SK-N-SH (cell line): ENCODE measurements at regions of chr11 and their contacts with region 1.

Region 1: GRCh38 chr11:19903620-19904069 is 191.0 kb downstream of the NAV2 start:
- DNase-seq: peak; percentile 59
- H3K4me3 ChIP-seq: no peak overlapping the region; a peak in 1 of 4 replicates
- H3K27ac ChIP-seq: peak overlapping the region; percentile 50 to 57
- H3K4me1 ChIP-seq: peaks cover 0 to 10% of the 10 kb centered on the region in 2 experiments; a peak in 2 of 4 replicates
- H3K27me3 ChIP-seq: no peaks in the 10 kb centered on the region
- CTCF ChIP-seq: peak; percentile 88
- EP300 ChIP-seq: 0 out of 4 replicates have a peak, but pooled peaks of 1 of the 2 experiments have one; percentile 14
- RAD21 ChIP-seq: peak; percentile 90

Region 2: GRCh38 chr11:19566583-19567379 is 336.9 kb before region 1 on chr11:
- CTCF ChIA-PET with region 1: interaction called, 131 read pairs
- POLR2A ChIA-PET with region 1: no interaction called
- DNase-seq: no peak
- H3K4me3 ChIP-seq: no peak overlapping the region
- H3K27ac ChIP-seq: no peak overlapping the region
- H3K4me1 ChIP-seq: peaks cover 0 to 33% of the 10 kb centered on the region in 2 experiments; a peak in 2 of 4 replicates
- H3K27me3 ChIP-seq: no peaks in the 10 kb centered on the region
- CTCF ChIP-seq: no peak
- EP300 ChIP-seq: no peak
- RAD21 ChIP-seq: no peak

Region 3: GRCh38 chr11:19814421-19814820 is 89.2 kb before region 1 on chr11:
- CTCF ChIA-PET with region 1: interaction called, 31 read pairs
- POLR2A ChIA-PET with region 1: no interaction called
- DNase-seq: no peak
- H3K4me3 ChIP-seq: no peak overlapping the region
- H3K27ac ChIP-seq: no peak overlapping the region
- H3K4me1 ChIP-seq: peaks cover 15 to 60% of the 10 kb centered on the region in 2 experiments; a peak in 3 of 4 replicates
- H3K27me3 ChIP-seq: no peaks in the 10 kb centered on the region
- CTCF ChIP-seq: no peak
- EP300 ChIP-seq: no peak
- RAD21 ChIP-seq: peak; percentile 29

Region 4: GRCh38 chr11:19879307-19880087 is 24.1 kb before region 1 on chr11:
- CTCF ChIA-PET with region 1: interaction called, 10 read pairs
- POLR2A ChIA-PET with region 1: no interaction called
- DNase-seq: no peak
- H3K4me3 ChIP-seq: no peak overlapping the region
- H3K27ac ChIP-seq: no peak overlapping the region; a peak in 1 of 4 replicates
- H3K4me1 ChIP-seq: peaks cover 0 to 18% of the 10 kb centered on the region in 2 experiments; a peak in 1 of 4 replicates
- H3K27me3 ChIP-seq: no peaks in the 10 kb centered on the region
- CTCF ChIP-seq: no peak
- EP300 ChIP-seq: no peak
- RAD21 ChIP-seq: no peak

Region 5: GRCh38 chr11:19922689-19923035 is 19.0 kb after region 1 on chr11:
- CTCF ChIA-PET with region 1: interaction called, 13 read pairs
- POLR2A ChIA-PET with region 1: no interaction called
- DNase-seq: no peak
- H3K4me3 ChIP-seq: no peak overlapping the region
- H3K27ac ChIP-seq: peak overlapping the region; percentile 95 to 100
- H3K4me1 ChIP-seq: peaks cover 16 to 63% of the 10 kb centered on the region in 2 experiments
- H3K27me3 ChIP-seq: no peaks in the 10 kb centered on the region
- CTCF ChIP-seq: no peak
- EP300 ChIP-seq: peak in 1 of 2 experiments; percentile 34; a peak in 1 of 4 replicates
- RAD21 ChIP-seq: no peak

Region 6: GRCh38 chr11:20355221-20356219 is 451.9 kb after region 1 on chr11:
- CTCF ChIA-PET with region 1: interaction called, 10 read pairs
- POLR2A ChIA-PET with region 1: no interaction called
- DNase-seq: peak; percentile 56
- H3K4me3 ChIP-seq: no peak overlapping the region; a peak in 1 of 4 replicates
- H3K27ac ChIP-seq: no peak overlapping the region
- H3K4me1 ChIP-seq: no peaks in the 10 kb centered on the region; a peak in 1 of 4 replicates
- H3K27me3 ChIP-seq: no peaks in the 10 kb centered on the region
- CTCF ChIP-seq: peak; percentile 72
- EP300 ChIP-seq: no peak
- RAD21 ChIP-seq: peak; percentile 60